Calu3 (cell line): ENCODE measurements at regions of chr1 and their contacts with region 1.

Region 1: DNA sequence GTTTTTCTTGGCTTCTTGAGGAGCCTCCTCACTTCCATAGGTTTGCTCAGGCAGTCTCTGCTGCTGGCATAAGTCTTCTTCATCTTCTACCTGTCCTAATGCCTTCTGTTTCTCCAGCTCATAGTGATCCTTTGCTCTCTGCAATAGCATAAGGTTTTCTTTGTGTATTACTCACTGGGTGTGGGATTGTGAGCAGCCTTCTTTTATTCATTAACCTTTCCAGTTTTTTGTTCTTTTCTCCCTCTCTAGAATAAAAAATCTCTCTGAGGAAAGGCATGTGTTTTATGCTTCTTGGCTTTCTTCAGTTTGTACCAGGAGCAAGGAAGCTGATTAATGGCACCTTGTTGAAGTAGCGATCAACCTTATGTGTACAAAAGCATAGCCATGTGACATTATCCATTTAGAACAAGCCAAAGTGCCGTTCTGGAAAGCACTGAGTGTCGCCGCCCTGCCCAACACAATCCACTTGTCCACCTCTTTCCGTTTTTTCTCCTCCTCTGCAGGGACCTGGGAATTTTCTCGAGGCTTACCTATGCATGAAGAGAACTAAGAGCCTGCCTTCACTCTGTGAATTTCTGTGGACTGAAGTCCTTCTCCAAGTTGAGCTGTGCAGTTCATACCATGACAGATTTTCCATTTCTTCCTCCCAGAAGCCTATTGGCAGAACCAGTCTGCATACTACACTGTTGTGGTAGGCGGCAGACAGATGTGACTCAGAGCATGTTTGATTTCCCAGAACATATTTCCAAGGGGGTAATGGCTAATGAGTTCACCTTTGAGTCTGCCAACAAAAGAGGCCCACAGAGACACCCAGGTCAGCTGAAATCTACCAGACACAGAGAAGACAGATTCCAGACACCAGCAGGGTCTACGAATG is 39.0 kb downstream of the DPT start:
- DNase-seq: peak; percentile 69
- H3K4me3 Mint-ChIP-seq: peak overlapping the region; percentile 67
- H3K27ac Mint-ChIP-seq: peak overlapping the region; percentile 99
- H3K4me1 Mint-ChIP-seq: peaks cover 88% of the 10 kb centered on the region
- H3K27me3 Mint-ChIP-seq: no peaks in the 10 kb centered on the region
- CTCF ChIP-seq: no peak

Region 2: DNA sequence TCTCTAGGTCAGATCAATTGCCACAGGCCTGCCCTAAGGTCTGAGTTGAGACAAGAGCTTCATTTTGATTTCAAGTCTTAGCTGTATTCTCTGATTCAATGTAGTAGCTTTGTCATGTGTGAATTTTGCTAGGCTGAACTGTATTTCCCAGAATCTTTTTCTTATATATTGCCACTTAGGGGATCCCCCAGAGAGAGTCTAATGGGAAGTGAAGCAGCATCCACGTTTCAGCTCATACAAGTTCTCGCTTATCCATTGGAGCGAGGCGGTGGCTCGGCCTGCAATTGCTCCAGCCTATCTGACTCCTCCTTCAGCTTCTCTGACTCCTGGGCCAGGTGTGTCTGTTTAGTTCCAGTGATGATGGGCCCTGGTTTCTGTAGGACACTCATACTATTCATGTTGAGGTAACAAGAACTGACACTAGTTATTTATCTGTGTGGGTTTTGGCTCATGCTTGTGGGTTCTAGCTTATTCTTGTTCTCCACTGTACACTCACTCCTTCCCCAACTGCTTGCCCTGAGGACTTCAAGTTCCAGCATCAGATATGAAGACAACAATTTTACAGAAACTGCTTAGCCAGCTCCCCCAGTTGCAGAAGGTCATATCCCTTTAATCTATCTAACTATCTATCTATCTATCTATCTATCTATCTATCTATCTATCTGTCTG is 361.1 kb before region 1 on chr1:
- CTCF ChIA-PET with region 1: no interaction called
- intact Hi-C with region 1: no loop called
- DNase-seq: no peak
- H3K4me3 Mint-ChIP-seq: no peak overlapping the region
- H3K27ac Mint-ChIP-seq: no peak overlapping the region
- H3K4me1 Mint-ChIP-seq: no peaks in the 10 kb centered on the region
- H3K27me3 Mint-ChIP-seq: no peaks in the 10 kb centered on the region
- CTCF ChIP-seq: no peak

Region 3: DNA sequence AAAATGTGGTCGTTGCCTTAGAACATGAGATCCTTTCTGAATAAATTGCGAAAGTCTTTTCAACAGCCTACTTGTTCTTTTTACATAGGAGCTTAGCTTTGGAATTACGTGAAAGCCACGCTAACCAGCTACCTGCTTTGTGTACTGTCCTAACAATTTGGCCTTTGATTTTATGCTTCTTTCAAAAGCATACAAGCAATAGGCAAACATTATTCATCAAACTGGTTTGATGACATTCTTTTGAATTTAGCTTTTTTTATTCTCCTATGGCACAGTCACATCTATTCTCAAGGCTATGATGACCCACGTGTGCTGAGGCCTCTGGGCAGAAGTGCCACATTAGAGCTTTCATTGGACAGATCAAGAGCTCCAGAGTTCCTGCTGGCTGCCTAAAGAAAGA is 217.1 kb after region 1 on chr1:
- CTCF ChIA-PET with region 1: no interaction called
- intact Hi-C with region 1: loop called (anchors 1 kb)
- DNase-seq: peak; percentile 61
- H3K4me3 Mint-ChIP-seq: peak overlapping the region; percentile 36
- H3K27ac Mint-ChIP-seq: peak overlapping the region; percentile 98
- H3K4me1 Mint-ChIP-seq: peaks cover 53% of the 10 kb centered on the region
- H3K27me3 Mint-ChIP-seq: no peaks in the 10 kb centered on the region
- CTCF ChIP-seq: no peak

Region 4: GRCh38 chr1:168920456-168921094 is 230.6 kb after region 1 on chr1:
- CTCF ChIA-PET with region 1: interaction called, 7 read pairs
- intact Hi-C with region 1: loop called (anchors 5 kb)
- DNase-seq: peak; percentile 64
- H3K4me3 Mint-ChIP-seq: peak overlapping the region; percentile 42
- H3K27ac Mint-ChIP-seq: peak overlapping the region; percentile 94
- H3K4me1 Mint-ChIP-seq: peaks cover 70% of the 10 kb centered on the region
- H3K27me3 Mint-ChIP-seq: no peaks in the 10 kb centered on the region
- CTCF ChIP-seq: no peak